A549 (cell line): ENCODE measurements at regions of chr7 and their contacts with region 1.

Region 1: GRCh38 chr7:149005241-149006050 is 22.9 kb downstream of the PDIA4 start:
- DNase-seq: peak; percentile 70 to 76
- ATAC-seq: peak; percentile 78 to 90
- H3K4me3 ChIP-seq: no peak overlapping the region
- H3K27ac ChIP-seq: no peak overlapping the region
- H3K4me1 ChIP-seq: no peaks in the 10 kb centered on the region
- CTCF ChIP-seq: peak; percentile 70
- EP300 ChIP-seq: no peak
- POLR2A ChIP-seq: no peak
- RAD21 ChIP-seq: peak; percentile 47 to 51; a peak in 4 of 5 replicates

Region 2: GRCh38 chr7:148819697-148820360 is 185.6 kb before region 1 on chr7:
- CTCF ChIA-PET with region 1: no interaction called
- POLR2A ChIA-PET with region 1: no interaction called
- DNase-seq: no peak
- ATAC-seq: no peak
- H3K4me3 ChIP-seq: no peak overlapping the region
- H3K27ac ChIP-seq: no peak overlapping the region
- H3K4me1 ChIP-seq: peaks cover 16% of the 10 kb centered on the region
- CTCF ChIP-seq: no peak
- EP300 ChIP-seq: no peak
- POLR2A ChIP-seq: no peak
- RAD21 ChIP-seq: no peak

Region 3: DNA sequence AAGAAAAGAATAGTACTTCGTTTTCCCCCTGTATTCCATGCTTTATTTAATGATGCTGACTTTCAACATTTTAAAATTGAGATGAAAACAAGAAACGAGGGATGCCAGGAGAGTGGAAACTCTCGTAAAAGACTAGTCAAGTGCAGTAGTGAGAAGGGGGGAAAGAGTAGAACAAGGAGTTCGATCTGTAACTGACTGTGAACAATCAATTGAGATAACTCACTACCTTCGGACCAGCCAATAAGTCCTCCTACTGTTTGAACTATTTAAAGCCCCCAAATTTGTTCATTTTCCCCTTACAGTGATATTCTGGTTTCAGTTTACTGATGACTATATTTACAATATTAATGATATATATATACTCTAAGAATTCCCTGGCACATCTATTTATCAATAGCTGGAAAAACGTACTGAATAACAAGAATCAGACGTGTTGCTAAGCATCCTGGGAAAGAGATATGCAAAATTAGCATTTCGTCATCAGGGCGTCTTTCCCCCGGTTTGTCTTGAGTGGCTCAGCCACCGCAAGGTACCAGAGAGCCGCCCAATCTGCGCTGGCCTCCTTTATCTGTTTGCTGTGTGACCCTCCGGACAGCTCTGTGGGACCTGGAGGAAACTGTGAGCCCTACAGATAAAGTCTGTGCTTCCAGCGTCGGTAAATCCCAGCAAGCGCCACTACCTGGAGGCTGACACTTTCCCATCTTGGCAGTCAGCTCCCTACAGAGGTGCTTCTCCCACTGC is 18.3 kb before region 1 on chr7:
- CTCF ChIA-PET with region 1: interaction called, 31 read pairs
- POLR2A ChIA-PET with region 1: no interaction called
- DNase-seq: peak; percentile 89 to 94
- ATAC-seq: peak; percentile 72 to 86
- H3K4me3 ChIP-seq: peak overlapping the region; percentile 59
- H3K27ac ChIP-seq: peak overlapping the region; percentile 61 to 76
- H3K4me1 ChIP-seq: peaks cover 16% of the 10 kb centered on the region
- CTCF ChIP-seq: no peak
- EP300 ChIP-seq: no peak
- POLR2A ChIP-seq: peak; percentile 46; the same call in 1 of the 2 replicates
- RAD21 ChIP-seq: no peak

Region 4: GRCh38 chr7:148993193-148993592 is 12.3 kb before region 1 on chr7:
- CTCF ChIA-PET with region 1: interaction called, 31 read pairs
- POLR2A ChIA-PET with region 1: no interaction called
- DNase-seq: no peak
- ATAC-seq: no peak
- H3K4me3 ChIP-seq: no peak overlapping the region
- H3K27ac ChIP-seq: no peak overlapping the region
- H3K4me1 ChIP-seq: peaks cover 6% of the 10 kb centered on the region
- CTCF ChIP-seq: no peak
- EP300 ChIP-seq: no peak
- POLR2A ChIP-seq: no peak
- RAD21 ChIP-seq: no peak

Region 5: GRCh38 chr7:149021725-149022062 is 16.2 kb after region 1 on chr7:
- CTCF ChIA-PET with region 1: interaction called, 45 read pairs
- POLR2A ChIA-PET with region 1: no interaction called
- DNase-seq: no peak
- ATAC-seq: no peak
- H3K4me3 ChIP-seq: no peak overlapping the region
- H3K27ac ChIP-seq: no peak overlapping the region
- H3K4me1 ChIP-seq: peaks cover 6% of the 10 kb centered on the region
- CTCF ChIP-seq: no peak
- EP300 ChIP-seq: no peak
- POLR2A ChIP-seq: no peak
- RAD21 ChIP-seq: no peak

Region 6: GRCh38 chr7:149028346-149029109 is 23.1 kb after region 1 on chr7 and contains the start of gene PDIA4:
- CTCF ChIA-PET with region 1: interaction called, 45 read pairs
- POLR2A ChIA-PET with region 1: no interaction called
- DNase-seq: peak; percentile 99
- ATAC-seq: peak; percentile 96 to 97
- H3K4me3 ChIP-seq: peak within 1 kb of the TSS; percentile 94
- H3K27ac ChIP-seq: peak within 1 kb of the TSS; percentile 96 to 98
- H3K4me1 ChIP-seq: peaks cover 14% of the 10 kb centered on the region
- CTCF ChIP-seq: no peak
- EP300 ChIP-seq: no peak
- POLR2A ChIP-seq: peak; percentile 94
- RAD21 ChIP-seq: no peak; a peak in 1 of 5 replicates
- polyA plus RNA-seq, gene PDIA4: 186 and 214 TPM in 2 replicates

Region 7: DNA sequence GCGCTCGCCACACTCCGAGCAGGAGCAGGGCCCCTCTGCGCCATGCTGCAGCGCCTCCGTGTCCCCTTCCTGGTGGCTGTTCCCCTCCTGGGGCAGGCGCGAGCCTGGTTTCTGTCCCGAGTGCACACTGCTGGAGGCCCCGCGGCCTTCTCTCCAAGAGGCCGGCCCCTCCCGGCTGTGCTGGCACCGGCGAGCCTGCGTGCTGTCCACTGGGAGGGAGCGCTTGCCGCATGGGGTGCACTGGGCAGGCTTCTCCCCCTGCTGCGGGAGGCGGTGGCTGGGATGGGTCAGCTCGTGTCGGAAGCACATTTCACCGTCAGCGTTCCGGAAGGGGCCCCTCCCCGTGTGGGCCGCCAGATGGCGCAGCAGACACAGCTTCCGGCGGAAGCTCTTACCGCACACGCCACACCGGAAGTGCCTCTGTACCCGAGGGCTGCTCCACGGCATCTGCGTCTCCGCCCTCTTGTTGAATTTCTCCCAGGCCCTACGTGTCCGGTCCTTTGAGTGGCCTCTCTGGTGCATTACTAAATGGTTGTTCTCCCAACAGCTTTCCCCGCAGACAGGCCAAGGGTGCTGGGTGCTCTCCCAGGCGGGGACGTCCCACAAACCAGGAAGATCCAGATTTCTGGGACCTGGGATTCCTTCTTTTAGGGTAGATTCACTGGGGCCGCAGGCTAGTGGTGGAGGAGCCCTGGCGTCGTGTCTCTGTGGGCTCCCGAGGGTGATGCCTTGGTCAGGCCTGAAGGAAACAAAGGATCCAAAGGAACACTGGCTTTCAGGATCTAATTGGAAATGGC is 66.4 kb after region 1 on chr7:
- CTCF ChIA-PET with region 1: interaction called, 33 read pairs
- POLR2A ChIA-PET with region 1: interaction called, 4 read pairs
- DNase-seq: peak; percentile 31 to 79
- ATAC-seq: peak; percentile 81 to 94
- H3K4me3 ChIP-seq: no peak overlapping the region
- H3K27ac ChIP-seq: no peak overlapping the region
- H3K4me1 ChIP-seq: no peaks in the 10 kb centered on the region
- CTCF ChIP-seq: peak; percentile 41
- EP300 ChIP-seq: no peak
- POLR2A ChIP-seq: no peak
- RAD21 ChIP-seq: peak; percentile 35 to 39; a peak in 3 of 5 replicates

Region 8: GRCh38 chr7:149409895-149410294 is 404.4 kb after region 1 on chr7:
- CTCF ChIA-PET with region 1: no interaction called
- POLR2A ChIA-PET with region 1: no interaction called
- DNase-seq: no peak
- ATAC-seq: no peak
- H3K4me3 ChIP-seq: no peak overlapping the region
- H3K27ac ChIP-seq: no peak overlapping the region
- H3K4me1 ChIP-seq: no peaks in the 10 kb centered on the region
- CTCF ChIP-seq: no peak
- EP300 ChIP-seq: no peak
- POLR2A ChIP-seq: no peak
- RAD21 ChIP-seq: no peak